ENCODE measurements at regions of chr6 and their contacts with region 1.

Region 1: DNA sequence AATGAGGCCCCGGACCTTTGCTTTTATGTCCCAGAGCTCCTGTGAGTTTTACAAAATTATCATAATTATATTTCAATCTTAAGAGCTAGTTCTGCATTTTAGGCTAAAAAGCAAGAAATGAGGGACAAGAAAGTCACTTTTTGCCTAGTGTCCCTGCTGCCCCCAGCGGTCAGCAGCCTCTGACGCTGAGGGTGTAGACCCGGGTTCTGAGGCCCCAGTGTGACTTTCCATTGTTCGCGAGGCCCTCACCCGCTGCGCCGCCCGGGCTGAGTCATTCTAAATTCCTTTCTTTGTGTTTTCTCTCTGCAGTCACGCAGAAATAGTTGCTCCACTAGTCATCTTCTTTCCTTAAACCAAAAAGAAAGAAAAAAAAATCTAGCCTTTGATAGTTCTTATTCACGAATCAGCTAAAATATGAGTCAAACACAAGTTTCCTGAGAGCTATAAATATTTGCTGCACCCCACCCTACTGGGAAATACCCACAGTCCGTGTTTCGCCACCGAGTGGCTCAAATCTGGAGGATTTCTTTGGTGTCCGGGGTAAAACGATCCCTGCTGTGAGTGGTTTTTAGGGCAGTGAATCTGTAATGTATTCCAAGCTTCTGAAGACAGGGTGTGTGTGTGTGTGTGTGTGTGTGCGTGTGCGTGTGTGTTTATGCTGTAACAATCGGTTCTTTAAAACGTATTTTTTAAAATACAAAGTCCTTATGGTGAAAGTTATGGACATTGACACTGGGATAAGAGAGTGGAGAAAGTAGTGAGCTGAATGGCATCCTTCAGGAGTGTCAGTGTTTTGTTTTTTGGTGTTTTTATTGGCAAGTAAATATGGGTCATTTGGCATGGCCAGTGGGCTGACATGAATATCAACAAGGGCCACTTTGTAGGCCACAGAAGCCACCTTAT is 59.7 kb upstream of the EEF1A1 start:
- DNase-seq: peak; percentile 76 to 95
- H3K4me3 ChIP-seq: peak overlapping the region; percentile 30 to 51
- H3K27ac ChIP-seq: peak overlapping the region; percentile 93 to 96
- H3K4me1 ChIP-seq: peaks cover 6 to 21% of the 10 kb centered on the region in 2 donors
- H3K27me3 ChIP-seq: no peaks in the 10 kb centered on the region
- CTCF ChIP-seq: peak in 2 of 3 experiments; percentile 49 to 50

Region 2: GRCh38 chr6:72894091-72894490 is 686.4 kb before region 1 on chr6:
- intact Hi-C with region 1: no loop called
- DNase-seq: no peak
- H3K4me3 ChIP-seq: no peak overlapping the region
- H3K27ac ChIP-seq: no peak overlapping the region
- H3K4me1 ChIP-seq: no peaks in the 10 kb centered on the region
- H3K27me3 ChIP-seq: no peaks in the 10 kb centered on the region
- CTCF ChIP-seq: no peak

Region 3: DNA sequence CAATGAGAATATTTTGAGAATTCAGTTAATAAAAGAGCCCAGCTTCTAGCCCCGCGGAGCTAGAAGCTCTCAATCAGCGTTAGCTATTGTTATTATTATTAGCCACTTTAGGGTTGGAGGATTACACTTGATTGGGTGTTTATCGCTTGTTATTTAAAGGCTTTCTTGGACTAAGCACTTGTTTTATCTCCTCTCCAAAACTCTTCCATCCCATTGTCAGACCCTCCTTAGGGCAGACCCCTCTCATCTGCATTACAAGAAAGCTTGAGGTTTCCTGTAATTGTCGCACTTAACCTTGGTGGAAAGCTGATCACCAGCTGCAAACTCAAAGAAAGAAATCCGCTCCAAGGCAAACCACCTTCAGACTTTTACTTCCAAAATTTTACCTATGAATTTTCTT is 231.2 kb before region 1 on chr6:
- intact Hi-C with region 1: no loop called
- DNase-seq: no peak
- H3K4me3 ChIP-seq: no peak overlapping the region
- H3K27ac ChIP-seq: no peak overlapping the region
- H3K4me1 ChIP-seq: no peaks in the 10 kb centered on the region
- H3K27me3 ChIP-seq: no peaks in the 10 kb centered on the region
- CTCF ChIP-seq: no peak

Region 4: GRCh38 chr6:73503027-73503772 is 77.3 kb before region 1 on chr6:
- intact Hi-C with region 1: no loop called
- DNase-seq: no peak
- H3K4me3 ChIP-seq: no peak overlapping the region
- H3K27ac ChIP-seq: no peak overlapping the region
- H3K4me1 ChIP-seq: no peaks in the 10 kb centered on the region
- H3K27me3 ChIP-seq: no peaks in the 10 kb centered on the region
- CTCF ChIP-seq: no peak

Region 5: GRCh38 chr6:73610444-73611275 is 30.2 kb after region 1 on chr6:
- intact Hi-C with region 1: loop called (anchors 2 kb)
- DNase-seq: no peak
- H3K4me3 ChIP-seq: no peak overlapping the region
- H3K27ac ChIP-seq: peak overlapping the region in 1 of 2 donors; percentile 27
- H3K4me1 ChIP-seq: peaks cover 0 to 3% of the 10 kb centered on the region in 2 donors
- H3K27me3 ChIP-seq: no peaks in the 10 kb centered on the region
- CTCF ChIP-seq: peak; percentile 60 to 72 (median 65)

Region 6: GRCh38 chr6:73653571-73654424 is 73.3 kb after region 1 on chr6 and contains the start of gene SLC17A5:
- intact Hi-C with region 1: loop called (anchors 1 kb)
- DNase-seq: peak; percentile 88 to 98
- H3K4me3 ChIP-seq: peak within 1 kb of the TSS; percentile 91 to 100
- H3K27ac ChIP-seq: peak within 1 kb of the TSS; percentile 97 to 98
- H3K4me1 ChIP-seq: peaks cover 0 to 4% of the 10 kb centered on the region in 2 donors
- H3K27me3 ChIP-seq: no peaks in the 10 kb centered on the region
- CTCF ChIP-seq: no peak
- total RNA-seq, gene SLC17A5: 23.2 TPM